Naive thymus-derived CD4-positive, alpha-beta T cell (primary cell): ENCODE measurements at regions of chr21 and their contacts with region 1.

Region 1: GRCh38 chr21:25801217-25802014 is 66.6 kb downstream of the GABPA start:
- DNase-seq: peak; percentile 66 to 89 (median 84)
- ATAC-seq: peak; percentile 100
- H3K4me3 ChIP-seq: no peak overlapping the region
- H3K4me3 Mint-ChIP-seq: peak overlapping the region in 8 of 10 donors; percentile 7 to 78 (median 60)
- H3K27ac ChIP-seq: no peak overlapping the region
- H3K27ac Mint-ChIP-seq: peak overlapping the region in 3 of 9 donors; percentile 7 to 15 (median 10)
- H3K4me1 ChIP-seq: no peaks in the 10 kb centered on the region
- H3K4me1 Mint-ChIP-seq: peaks cover 2 to 10% (median 7%) of the 10 kb centered on the region in 7 donors
- H3K27me3 ChIP-seq: no peaks in the 10 kb centered on the region
- H3K27me3 Mint-ChIP-seq: peaks cover 5 to 31% (median 19%) of the 10 kb centered on the region in 5 donors

Region 2: DNA sequence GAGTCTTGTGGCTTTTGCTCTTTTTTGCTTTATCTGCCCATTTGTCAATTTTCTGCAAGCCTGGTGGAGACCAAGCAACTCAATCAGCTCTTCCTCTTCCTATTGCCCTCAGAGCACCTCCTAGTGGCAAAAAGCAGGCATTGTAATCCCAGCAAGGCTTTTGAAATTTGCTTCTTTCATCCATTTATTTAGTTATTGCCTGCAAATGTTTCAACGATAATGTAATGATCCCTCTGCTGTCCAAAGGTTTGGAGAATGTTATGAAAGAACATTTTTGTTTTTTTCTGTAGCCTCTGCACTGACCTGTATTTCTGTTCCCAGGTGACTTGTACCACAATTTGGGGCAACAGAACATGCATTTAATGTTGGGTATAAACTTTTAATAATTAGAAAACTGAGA is 61.2 kb after region 1 on chr21:
- CTCF ChIA-PET with region 1: no interaction called
- POLR2A ChIA-PET with region 1: no interaction called
- intact Hi-C with region 1: loop called in 1 of 2 experiments (anchors 5 kb)
- DNase-seq: peak in 6 of 9 donors; percentile 7 to 33 (median 20)
- ATAC-seq: peak; percentile 54
- H3K4me3 ChIP-seq: no peak overlapping the region
- H3K4me3 Mint-ChIP-seq: no peak overlapping the region
- H3K27ac ChIP-seq: no peak overlapping the region
- H3K27ac Mint-ChIP-seq: no peak overlapping the region
- H3K4me1 ChIP-seq: no peaks in the 10 kb centered on the region
- H3K4me1 Mint-ChIP-seq: peaks cover 0 to 7% (median 0%) of the 10 kb centered on the region in 7 donors
- H3K27me3 ChIP-seq: no peaks in the 10 kb centered on the region
- H3K27me3 Mint-ChIP-seq: peaks cover 0 to 19% (median 0%) of the 10 kb centered on the region in 5 donors

Region 3: DNA sequence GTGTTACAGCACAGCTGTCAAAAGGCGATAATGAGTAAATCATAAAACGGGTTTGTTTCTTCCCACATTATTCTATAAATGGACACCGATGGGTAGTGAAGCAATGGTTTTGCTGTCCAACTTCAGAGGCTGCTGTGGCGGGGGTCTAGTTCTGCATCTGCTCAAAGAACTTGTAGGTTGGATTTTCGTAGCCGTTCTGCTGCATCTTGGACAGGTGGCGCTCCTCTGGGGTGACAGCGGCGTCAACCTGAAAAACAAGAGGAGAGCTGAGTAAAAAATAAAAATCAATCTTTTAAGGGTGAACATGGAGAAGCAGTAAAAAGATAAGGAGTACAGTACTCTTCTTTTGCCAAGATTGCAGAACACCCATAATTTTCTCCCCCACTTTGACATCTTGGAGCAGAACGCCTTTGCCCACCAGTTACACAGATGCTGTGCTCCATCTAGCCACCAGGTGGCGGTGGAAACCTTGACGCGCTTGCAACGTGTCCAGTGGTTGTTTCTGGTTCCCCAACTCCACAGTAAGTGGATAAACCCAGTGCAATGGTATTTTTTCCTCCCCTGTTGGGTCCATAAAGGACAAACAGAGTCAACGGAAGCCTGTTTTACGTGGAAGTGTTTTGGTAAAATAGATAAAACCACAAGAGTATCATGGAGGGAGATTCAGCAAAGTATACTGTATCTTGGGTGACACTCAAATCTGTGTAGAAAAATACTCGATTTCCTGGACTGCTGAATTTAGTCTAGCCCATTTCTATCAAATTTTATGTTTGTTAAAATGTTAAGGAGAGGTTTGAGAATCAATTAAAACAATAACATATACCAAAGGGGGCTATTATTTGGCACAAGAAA is 80.3 kb after region 1 on chr21:
- CTCF ChIA-PET with region 1: no interaction called
- POLR2A ChIA-PET with region 1: no interaction called
- intact Hi-C with region 1: no loop called
- DNase-seq: peak; percentile 27 to 66 (median 54)
- ATAC-seq: peak; percentile 81
- H3K4me3 ChIP-seq: no peak overlapping the region
- H3K4me3 Mint-ChIP-seq: no peak overlapping the region
- H3K27ac ChIP-seq: no peak overlapping the region
- H3K27ac Mint-ChIP-seq: no peak overlapping the region
- H3K4me1 ChIP-seq: no peaks in the 10 kb centered on the region
- H3K4me1 Mint-ChIP-seq: peaks cover 0 to 2% (median 0%) of the 10 kb centered on the region in 7 donors
- H3K27me3 ChIP-seq: no peaks in the 10 kb centered on the region
- H3K27me3 Mint-ChIP-seq: peaks cover 0 to 3% (median 0%) of the 10 kb centered on the region in 5 donors